CD4-positive, alpha-beta memory T cell (primary cell): ENCODE measurements at regions of chr4 and their contacts with region 1.

Region 1: DNA sequence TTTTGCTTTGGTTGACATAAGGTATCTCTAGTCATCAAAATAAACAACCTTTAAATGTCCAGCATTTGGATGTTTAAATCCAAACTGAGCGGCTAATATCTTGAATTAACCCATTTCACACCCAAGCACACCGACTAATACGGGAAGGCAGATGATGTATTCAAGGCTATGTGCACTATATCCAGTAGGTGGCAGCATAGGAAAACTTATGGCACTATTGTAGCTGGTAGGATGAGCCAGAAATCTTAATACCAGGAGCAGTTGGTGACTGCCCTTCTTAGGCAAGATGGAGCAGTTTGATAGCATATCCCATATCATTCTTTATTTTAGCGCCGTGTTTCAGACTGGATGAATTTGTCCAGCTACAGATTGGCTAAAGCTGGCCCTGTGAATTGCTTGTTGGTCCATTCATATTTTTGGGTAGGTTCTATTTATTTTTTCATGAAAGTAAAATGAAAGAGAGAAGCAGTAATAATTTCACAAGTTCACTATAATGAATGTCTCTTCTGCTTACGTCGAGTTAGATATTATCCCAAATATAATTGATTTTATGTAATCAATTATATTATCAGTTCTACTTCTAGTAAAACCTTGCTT is 24.4 kb downstream of the UCHL1 start:
- DNase-seq: peak in 4 of 5 donors; percentile 32 to 48 (median 40)
- H3K4me3 ChIP-seq: no peak overlapping the region
- H3K4me3 Mint-ChIP-seq: no peak overlapping the region
- H3K27ac ChIP-seq: no peak overlapping the region
- H3K27ac Mint-ChIP-seq: no peak overlapping the region
- H3K4me1 ChIP-seq: no peaks in the 10 kb centered on the region
- H3K4me1 Mint-ChIP-seq: no peaks in the 10 kb centered on the region
- H3K27me3 ChIP-seq: no peaks in the 10 kb centered on the region
- H3K27me3 Mint-ChIP-seq: peaks cover 2 to 9% of the 10 kb centered on the region in 2 donors

Region 2: GRCh38 chr4:41133454-41134018 is 147.6 kb before region 1 on chr4:
- CTCF ChIA-PET with region 1: no interaction called
- POLR2A ChIA-PET with region 1: no interaction called
- intact Hi-C with region 1: no loop called
- DNase-seq: no peak
- H3K4me3 ChIP-seq: no peak overlapping the region
- H3K4me3 Mint-ChIP-seq: no peak overlapping the region
- H3K27ac ChIP-seq: no peak overlapping the region
- H3K27ac Mint-ChIP-seq: no peak overlapping the region
- H3K4me1 ChIP-seq: no peaks in the 10 kb centered on the region
- H3K4me1 Mint-ChIP-seq: no peaks in the 10 kb centered on the region
- H3K27me3 ChIP-seq: no peaks in the 10 kb centered on the region
- H3K27me3 Mint-ChIP-seq: peaks cover 0 to 6% of the 10 kb centered on the region in 2 donors

Region 3: DNA sequence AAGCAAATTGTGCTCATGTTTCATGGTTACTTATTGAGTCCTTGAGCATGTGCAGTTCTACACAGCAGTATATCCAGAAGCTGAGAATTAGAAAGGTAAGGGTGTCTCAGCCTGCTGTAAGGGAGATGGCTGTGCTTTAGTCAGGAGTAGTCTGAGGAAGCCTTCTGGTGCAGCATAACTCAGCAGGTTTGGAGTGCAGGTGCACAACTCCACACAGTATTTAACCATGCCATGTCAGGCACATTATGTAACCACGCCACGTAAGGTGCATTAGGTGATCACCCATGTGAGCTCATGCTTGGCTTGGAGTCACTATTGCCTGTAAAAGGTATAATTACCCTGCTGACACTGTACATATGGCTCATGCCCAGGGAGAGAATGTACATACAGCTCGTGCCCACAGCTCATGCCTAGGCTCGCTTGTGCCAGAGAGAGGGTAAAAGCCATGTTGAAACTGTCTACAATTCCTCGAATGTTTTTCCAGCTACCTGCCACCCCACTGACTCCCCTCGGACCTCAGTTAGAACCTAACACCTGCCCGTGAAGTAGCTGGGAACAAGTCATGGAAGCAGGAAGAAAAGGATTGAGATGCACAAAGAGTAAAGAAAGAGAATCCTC is 13.4 kb after region 1 on chr4:
- CTCF ChIA-PET with region 1: interaction called, 16 read pairs
- POLR2A ChIA-PET with region 1: no interaction called
- intact Hi-C with region 1: no loop called
- DNase-seq: peak in 1 of 5 donors; percentile 16
- H3K4me3 ChIP-seq: no peak overlapping the region
- H3K4me3 Mint-ChIP-seq: no peak overlapping the region
- H3K27ac ChIP-seq: no peak overlapping the region
- H3K27ac Mint-ChIP-seq: no peak overlapping the region
- H3K4me1 ChIP-seq: no peaks in the 10 kb centered on the region
- H3K4me1 Mint-ChIP-seq: no peaks in the 10 kb centered on the region
- H3K27me3 ChIP-seq: no peaks in the 10 kb centered on the region
- H3K27me3 Mint-ChIP-seq: peaks cover 0 to 3% of the 10 kb centered on the region in 2 donors

Region 4: DNA sequence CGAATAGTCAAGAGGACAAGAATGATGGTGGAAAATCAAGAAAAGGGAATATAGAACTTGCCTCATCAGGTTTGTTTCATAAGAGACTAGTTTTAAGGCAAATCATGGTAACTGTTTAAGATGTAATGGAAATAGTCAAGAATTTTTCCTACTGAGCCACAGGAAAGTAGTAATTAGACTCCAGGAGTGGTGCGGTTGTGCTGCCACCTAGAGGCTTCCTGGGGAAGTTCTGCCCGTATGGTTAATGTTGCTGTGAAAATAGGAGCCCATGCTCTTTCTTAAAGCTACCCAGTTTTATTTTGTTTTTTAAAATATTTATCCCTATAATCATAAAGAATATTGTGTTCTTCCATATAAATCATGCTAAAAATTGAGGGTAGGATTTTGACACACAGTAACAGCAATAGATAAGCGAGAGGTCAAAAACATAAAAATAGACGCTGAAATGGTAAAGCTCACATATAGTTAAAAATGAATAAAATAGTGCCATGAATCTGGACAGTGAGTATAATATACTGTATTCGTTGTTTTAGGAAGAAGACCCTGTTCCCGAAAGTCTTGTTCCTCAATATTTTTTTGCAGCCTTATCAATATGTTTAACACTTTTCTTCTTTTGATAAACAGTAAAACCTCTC is 380.4 kb after region 1 on chr4:
- CTCF ChIA-PET with region 1: interaction called, 44 read pairs
- POLR2A ChIA-PET with region 1: no interaction called
- intact Hi-C with region 1: loop called (anchors 1 kb)
- DNase-seq: peak in 3 of 5 donors; percentile 5 to 18 (median 17)
- H3K4me3 ChIP-seq: no peak overlapping the region
- H3K4me3 Mint-ChIP-seq: no peak overlapping the region
- H3K27ac ChIP-seq: no peak overlapping the region
- H3K27ac Mint-ChIP-seq: no peak overlapping the region
- H3K4me1 ChIP-seq: no peaks in the 10 kb centered on the region
- H3K4me1 Mint-ChIP-seq: no peaks in the 10 kb centered on the region
- H3K27me3 ChIP-seq: no peaks in the 10 kb centered on the region
- H3K27me3 Mint-ChIP-seq: peaks cover 0 to 5% of the 10 kb centered on the region in 2 donors

Region 5: GRCh38 chr4:41882625-41883347 is 601.6 kb after region 1 on chr4:
- CTCF ChIA-PET with region 1: interaction called, 40 read pairs
- POLR2A ChIA-PET with region 1: no interaction called
- intact Hi-C with region 1: loop called (anchors 1 kb)
- DNase-seq: peak in 4 of 5 donors; percentile 47 to 54 (median 52)
- H3K4me3 ChIP-seq: peak overlapping the region in 1 of 2 donors; percentile 44
- H3K4me3 Mint-ChIP-seq: peak overlapping the region; percentile 54 to 83 (median 74)
- H3K27ac ChIP-seq: no peak overlapping the region
- H3K27ac Mint-ChIP-seq: peak overlapping the region in 1 of 7 donors; percentile 65
- H3K4me1 ChIP-seq: peaks cover 13% of the 10 kb centered on the region
- H3K4me1 Mint-ChIP-seq: peaks cover 9 to 39% (median 22%) of the 10 kb centered on the region in 4 donors
- H3K27me3 ChIP-seq: peaks cover 32% of the 10 kb centered on the region
- H3K27me3 Mint-ChIP-seq: peaks cover 52 to 57% of the 10 kb centered on the region in 2 donors

Region 6: DNA sequence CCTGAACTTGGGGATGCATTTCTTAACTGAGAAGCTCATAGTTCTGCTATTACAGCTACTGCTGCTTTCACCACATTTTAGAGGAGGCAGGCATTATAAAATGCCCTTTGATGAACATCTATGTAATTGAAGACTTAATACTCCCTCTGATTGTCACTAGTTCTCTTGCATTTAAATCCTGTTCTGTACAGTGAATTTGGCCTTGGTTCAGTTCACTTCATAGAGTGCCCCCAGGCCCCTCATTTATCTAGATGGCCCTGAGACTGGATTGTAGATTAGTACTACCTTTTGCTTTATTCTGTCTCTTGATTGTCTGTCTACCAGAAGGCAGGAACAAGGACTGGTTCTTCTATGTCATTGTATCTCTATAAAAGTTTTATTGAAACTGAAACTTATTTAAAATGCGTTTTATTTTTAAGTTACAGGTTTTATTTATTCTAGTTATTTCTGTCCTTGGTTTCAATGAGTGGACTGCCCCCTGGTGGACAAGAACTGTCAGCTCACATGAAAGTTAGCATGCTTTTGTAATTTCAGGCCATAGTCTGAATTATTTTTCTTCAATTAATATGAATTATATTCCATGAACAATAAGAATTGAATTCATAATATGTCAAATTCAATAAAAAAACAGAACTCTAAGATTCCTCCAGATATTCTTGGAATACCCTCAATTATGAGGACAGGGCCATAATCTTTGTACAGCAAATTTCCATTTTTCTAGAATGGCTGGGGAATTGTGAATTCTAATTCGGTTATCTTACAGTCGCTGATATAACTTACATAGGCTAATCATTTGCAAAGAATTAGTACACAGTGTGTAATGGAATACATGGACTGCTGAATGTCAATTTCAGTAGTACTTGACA is 606.9 kb after region 1 on chr4:
- CTCF ChIA-PET with region 1: interaction called, 40 read pairs
- POLR2A ChIA-PET with region 1: no interaction called
- intact Hi-C with region 1: loop called (anchors 1 kb)
- DNase-seq: peak in 3 of 5 donors; percentile 29 to 34 (median 32)
- H3K4me3 ChIP-seq: no peak overlapping the region
- H3K4me3 Mint-ChIP-seq: no peak overlapping the region
- H3K27ac ChIP-seq: no peak overlapping the region
- H3K27ac Mint-ChIP-seq: no peak overlapping the region
- H3K4me1 ChIP-seq: no peaks in the 10 kb centered on the region
- H3K4me1 Mint-ChIP-seq: peaks cover 0 to 4% (median 1%) of the 10 kb centered on the region in 4 donors
- H3K27me3 ChIP-seq: no peaks in the 10 kb centered on the region
- H3K27me3 Mint-ChIP-seq: peaks cover 31 to 36% of the 10 kb centered on the region in 2 donors